Activated CD8-positive, alpha-beta T cell treated with anti-CD3 and anti-CD28 coated beads for 36 hours (primary cell): ENCODE measurements at regions of chr17 and their contacts with region 1.

Region 1: DNA sequence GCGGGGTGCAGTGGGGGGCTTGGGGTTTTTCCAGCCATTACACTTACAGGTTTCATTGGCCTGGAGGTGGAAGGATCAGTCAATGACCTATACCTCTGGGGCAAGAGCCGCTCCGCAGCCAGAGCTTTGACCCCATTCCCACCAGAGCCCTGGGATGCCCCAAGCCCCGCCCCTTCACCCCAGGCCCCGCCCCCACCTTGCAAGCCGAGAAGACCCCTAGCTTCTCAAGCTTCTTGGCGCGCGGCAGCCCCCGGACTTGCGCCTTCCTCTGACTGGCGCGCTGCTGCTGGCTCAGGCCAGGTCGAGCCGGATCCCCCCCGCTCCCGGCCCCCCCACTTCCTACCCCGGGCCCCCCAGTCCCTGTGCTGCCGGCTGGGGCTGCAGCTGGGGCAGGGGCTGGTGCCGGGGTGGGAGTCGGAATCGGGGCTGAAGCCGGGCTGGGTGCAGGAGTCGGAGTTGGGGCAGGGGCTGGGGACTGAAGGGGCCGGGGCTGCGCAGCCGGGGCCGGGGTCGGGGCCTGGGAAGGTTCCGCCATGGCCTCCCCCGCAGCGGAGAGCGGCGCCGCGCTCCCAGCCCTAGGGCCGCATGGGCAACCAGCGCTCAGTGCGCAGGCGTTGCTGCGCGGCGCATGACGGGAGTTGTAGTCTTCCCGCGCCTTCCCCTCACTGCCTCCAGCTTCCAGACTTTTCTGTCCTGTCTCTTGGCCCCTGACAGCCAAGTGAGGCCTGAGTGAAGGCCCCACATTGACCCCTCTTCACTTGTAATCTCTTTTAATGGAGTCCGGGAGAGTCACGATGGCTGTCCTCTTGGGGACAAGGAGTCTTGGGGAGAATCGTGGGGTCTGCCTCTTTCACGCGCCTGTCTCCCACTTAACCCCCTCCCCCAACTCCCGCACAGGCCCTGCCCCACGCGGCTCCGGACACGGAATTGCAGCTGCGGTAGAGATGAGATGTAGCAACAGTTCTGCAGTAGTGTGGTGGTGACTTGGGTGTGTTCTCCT is at the start of gene KAT2A:
- DNase-seq: peak; percentile 84
- ATAC-seq: peak; percentile 87
- H3K4me3 Mint-ChIP-seq: peak within 1 kb of the TSS; percentile 67
- H3K27ac Mint-ChIP-seq: peak within 1 kb of the TSS; percentile 85
- H3K4me1 Mint-ChIP-seq: peaks cover 30% of the 10 kb centered on the region
- H3K27me3 Mint-ChIP-seq: no peaks in the 10 kb centered on the region
- CTCF ChIP-seq: no peak
- total RNA-seq, gene KAT2A: 49.2 to 50.2 TPM

Region 2: DNA sequence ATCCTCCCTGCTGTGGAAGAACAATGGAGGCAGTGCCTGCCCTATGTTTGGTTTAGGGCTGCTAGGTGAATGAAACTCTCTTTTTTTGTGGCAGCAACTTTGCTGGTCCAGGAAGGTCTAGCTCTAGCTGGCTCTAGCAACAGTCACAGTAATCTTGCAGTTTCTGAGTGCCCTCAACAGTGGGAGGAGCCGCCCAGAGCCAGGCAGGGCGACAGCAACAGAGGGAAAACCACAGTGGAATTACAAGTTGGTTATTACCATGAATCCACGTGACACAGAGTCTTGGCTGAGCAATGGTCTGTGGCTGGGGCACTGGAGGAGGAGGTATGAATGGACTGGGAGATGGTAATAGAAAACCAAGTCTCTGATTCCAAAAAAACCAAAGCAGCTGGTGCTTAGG is 11.9 kb after region 1 on chr17:
- CTCF ChIA-PET with region 1: interaction called, 7 read pairs
- POLR2A ChIA-PET with region 1: interaction called, 24 read pairs
- intact Hi-C with region 1: no loop called
- DNase-seq: peak; percentile 47
- ATAC-seq: peak; percentile 62
- H3K4me3 Mint-ChIP-seq: no peak overlapping the region
- H3K27ac Mint-ChIP-seq: peak overlapping the region; percentile 43
- H3K4me1 Mint-ChIP-seq: peaks cover 59% of the 10 kb centered on the region
- H3K27me3 Mint-ChIP-seq: no peaks in the 10 kb centered on the region
- CTCF ChIP-seq: no peak

Region 3: DNA sequence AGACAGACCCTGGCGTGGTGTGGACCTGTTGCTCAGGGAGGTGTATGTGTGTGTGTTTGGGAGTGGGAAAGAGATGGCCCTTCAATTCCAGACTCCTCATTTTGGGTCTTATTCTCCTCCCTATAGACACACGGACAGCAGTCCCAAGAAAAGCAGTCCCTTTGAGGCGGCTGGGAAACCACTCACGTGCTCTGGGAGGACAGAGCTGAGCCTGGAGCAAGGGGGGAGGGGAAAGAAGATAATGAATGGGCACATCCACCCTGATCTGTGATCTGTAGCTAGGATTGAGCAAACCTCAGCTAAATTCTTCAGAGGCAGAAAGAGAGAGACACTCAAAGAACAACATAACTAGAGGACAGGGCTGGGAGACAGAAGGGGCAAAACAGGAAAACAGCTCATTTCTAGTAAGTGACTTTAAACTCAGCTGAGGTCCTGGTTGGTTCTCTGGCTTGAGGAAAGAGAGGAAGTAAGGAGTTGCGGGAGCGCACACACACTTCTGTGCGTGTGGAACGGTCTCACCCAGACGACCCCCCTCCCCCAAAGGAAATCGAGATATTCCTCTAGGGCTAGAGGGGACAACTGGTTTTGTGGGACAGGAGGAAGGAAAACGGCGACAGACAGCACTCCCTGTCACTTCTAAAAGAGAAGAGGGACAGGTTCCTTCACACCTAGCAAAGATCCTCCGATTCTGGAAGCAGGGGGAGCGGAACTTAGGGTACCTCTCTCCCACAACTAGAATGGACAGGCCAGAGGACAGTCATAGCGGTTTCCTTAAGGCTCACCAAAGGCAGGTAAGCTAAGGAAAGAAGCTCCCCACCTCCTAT is 33.1 kb after region 1 on chr17:
- CTCF ChIA-PET with region 1: interaction called, 5 read pairs
- POLR2A ChIA-PET with region 1: interaction called, 13 read pairs
- intact Hi-C with region 1: no loop called
- DNase-seq: no peak
- ATAC-seq: no peak
- H3K4me3 Mint-ChIP-seq: peak overlapping the region; percentile 83
- H3K27ac Mint-ChIP-seq: peak overlapping the region; percentile 79
- H3K4me1 Mint-ChIP-seq: peaks cover 28% of the 10 kb centered on the region
- H3K27me3 Mint-ChIP-seq: no peaks in the 10 kb centered on the region
- CTCF ChIP-seq: no peak

Region 4: GRCh38 chr17:42180922-42181850 is 60.1 kb after region 1 on chr17 and contains the start of gene KCNH4:
- CTCF ChIA-PET with region 1: interaction called, 28 read pairs
- POLR2A ChIA-PET with region 1: no interaction called
- intact Hi-C with region 1: no loop called
- DNase-seq: peak; percentile 92
- ATAC-seq: peak; percentile 65
- H3K4me3 Mint-ChIP-seq: peak within 1 kb of the TSS; percentile 59
- H3K27ac Mint-ChIP-seq: no peak within 1 kb of the TSS
- H3K4me1 Mint-ChIP-seq: peaks cover 43% of the 10 kb centered on the region
- H3K27me3 Mint-ChIP-seq: peaks cover 21% of the 10 kb centered on the region
- CTCF ChIP-seq: peak; percentile 68
- total RNA-seq, gene KCNH4: 0.38 to 0.43 TPM